ENCODE measurements at regions of chr2 and their contacts with region 1.

Region 1: DNA sequence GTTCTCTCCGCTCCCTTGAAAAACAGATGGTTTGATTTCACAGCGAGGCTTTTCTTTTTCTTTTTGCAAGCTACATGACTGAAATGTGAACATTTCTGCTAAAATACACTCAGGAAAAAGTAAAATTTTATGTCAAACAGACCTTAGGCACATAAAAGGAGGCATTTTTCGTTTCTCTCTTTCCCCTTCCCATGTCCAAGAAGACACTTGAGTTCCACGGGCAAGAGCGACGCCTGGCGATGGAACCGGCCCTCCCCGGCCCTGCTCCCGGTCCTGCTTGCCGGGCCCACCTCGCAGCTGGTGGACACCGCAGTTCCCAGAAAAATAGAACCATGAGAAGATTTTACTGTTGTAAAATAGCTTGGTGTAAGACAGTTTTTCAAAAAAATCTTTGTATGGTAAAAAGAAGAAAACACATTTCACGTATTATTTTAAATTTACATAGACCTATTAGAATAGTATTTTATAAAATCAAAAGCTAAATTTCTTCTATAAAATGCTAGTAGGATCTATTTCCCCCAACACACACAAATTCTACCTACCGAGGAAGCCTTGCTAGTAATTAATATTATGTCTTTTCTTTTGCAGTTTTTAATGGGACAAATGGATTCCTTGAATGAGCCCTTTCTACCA is 2.3 kb upstream of the ALKAL2 start:
- DNase-seq: peak; percentile 78
- ATAC-seq: peak; percentile 83
- H3K4me3 ChIP-seq: peak overlapping the region; percentile 50
- H3K27ac ChIP-seq: no peak overlapping the region
- H3K4me1 ChIP-seq: peaks cover 7% of the 10 kb centered on the region
- H3K27me3 ChIP-seq: peaks cover 24% of the 10 kb centered on the region
- CTCF ChIP-seq: peak; percentile 91
- POLR2A ChIP-seq: no peak
- RAD21 ChIP-seq: peak; percentile 89

Region 2: GRCh38 chr2:169741-170140 is 120.5 kb before region 1 on chr2:
- CTCF ChIA-PET with region 1: no interaction called
- POLR2A ChIA-PET with region 1: no interaction called
- dilution Hi-C with region 1: no loop called
- in situ Hi-C with region 1: no loop called
- intact Hi-C with region 1: loop called (anchors 5 kb)
- DNase-seq: no peak
- ATAC-seq: no peak
- H3K4me3 ChIP-seq: no peak overlapping the region
- H3K27ac ChIP-seq: no peak overlapping the region
- H3K4me1 ChIP-seq: no peaks in the 10 kb centered on the region
- H3K27me3 ChIP-seq: no peaks in the 10 kb centered on the region
- CTCF ChIP-seq: no peak
- POLR2A ChIP-seq: no peak
- RAD21 ChIP-seq: no peak

Region 3: DNA sequence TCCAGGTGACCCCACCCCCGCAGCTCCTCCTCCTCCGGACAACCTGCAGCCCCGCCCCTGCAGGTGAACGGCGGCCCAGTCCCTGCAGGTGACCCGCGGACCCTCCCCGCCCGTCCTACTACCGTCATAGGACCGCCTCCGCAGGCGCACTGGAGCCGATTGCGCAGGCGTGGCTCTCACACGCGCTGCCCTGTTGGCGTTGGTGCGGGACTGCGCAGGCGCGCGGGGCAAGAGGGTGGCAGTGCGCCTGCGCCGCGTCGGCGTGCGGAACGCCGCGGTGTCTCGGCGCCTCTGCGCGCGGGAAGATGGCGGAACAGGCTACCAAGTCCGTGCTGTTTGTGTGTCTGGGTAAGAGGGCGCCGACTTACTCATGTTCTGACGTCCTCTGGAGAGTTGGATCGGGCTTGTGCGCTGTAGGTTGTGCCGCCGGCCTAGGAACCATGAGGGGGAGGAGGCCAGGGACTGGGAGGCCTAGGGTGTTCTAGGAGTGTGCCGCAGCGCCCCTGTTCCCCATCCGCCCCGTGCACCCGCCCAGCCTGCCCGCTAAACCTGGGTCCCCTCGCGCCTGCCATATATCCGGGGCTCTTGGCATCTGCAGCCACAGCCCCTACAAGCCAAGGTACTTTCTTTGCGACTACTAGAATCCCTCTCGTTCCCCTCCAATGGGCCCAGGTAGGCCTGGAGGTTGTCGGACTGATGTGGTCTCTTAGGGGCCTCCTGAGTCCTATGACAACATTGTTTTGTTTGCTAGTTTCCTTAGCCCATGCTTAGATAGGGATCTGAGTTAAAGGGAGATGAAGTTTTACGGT is 25.3 kb before region 1 on chr2 and contains the start of gene ACP1:
- CTCF ChIA-PET with region 1: interaction called, 4 read pairs
- POLR2A ChIA-PET with region 1: interaction called, 3 read pairs
- dilution Hi-C with region 1: no loop called
- in situ Hi-C with region 1: no loop called
- intact Hi-C with region 1: loop called (anchors 1 kb)
- DNase-seq: peak; percentile 93
- ATAC-seq: peak; percentile 86
- H3K4me3 ChIP-seq: peak within 1 kb of the TSS; percentile 98
- H3K27ac ChIP-seq: peak within 1 kb of the TSS; percentile 95
- H3K4me1 ChIP-seq: peaks cover 12% of the 10 kb centered on the region
- H3K27me3 ChIP-seq: no peaks in the 10 kb centered on the region
- CTCF ChIP-seq: 0 out of 2 replicates have a peak, but pooled peaks have one; percentile 2
- POLR2A ChIP-seq: peak; percentile 89
- RAD21 ChIP-seq: no peak
- total RNA-seq, gene ACP1: 85.7 and 123 TPM in 2 replicates